ENCODE measurements at regions of chr14 and their contacts with region 1.

Region 1: DNA sequence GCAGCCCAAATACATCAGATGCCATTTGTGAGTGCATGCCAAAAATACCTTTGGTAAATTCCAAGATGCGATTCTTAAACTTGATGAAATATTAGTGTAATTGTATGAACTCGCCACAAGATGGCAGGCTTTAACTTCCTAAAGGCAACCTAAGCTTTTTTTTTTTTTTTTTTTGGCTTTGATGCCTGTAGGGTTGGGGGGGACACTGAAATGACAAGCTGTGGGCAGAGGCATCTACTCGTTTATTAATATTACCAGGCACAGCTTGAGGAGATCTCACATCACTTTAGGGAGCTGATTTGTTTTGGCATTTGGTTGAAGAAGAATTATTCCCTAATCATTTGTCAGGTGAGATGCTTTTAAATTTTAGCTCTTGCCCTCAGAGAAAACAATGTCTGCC is 126.7 kb upstream of the CCDC196 start:
- DNase-seq: peak; percentile 15
- ATAC-seq: peak; percentile 24; the same call in 2 of the 3 replicates
- H3K4me3 ChIP-seq: no peak overlapping the region
- H3K27ac ChIP-seq: no peak overlapping the region
- H3K4me1 ChIP-seq: no peaks in the 10 kb centered on the region
- H3K27me3 ChIP-seq: no peaks in the 10 kb centered on the region
- CTCF ChIP-seq: peak; percentile 21 to 66 (median 53); a peak in 5 of 6 replicates
- EP300 ChIP-seq: no peak
- POLR2A ChIP-seq: no peak
- RAD21 ChIP-seq: peak; percentile 97

Region 2: DNA sequence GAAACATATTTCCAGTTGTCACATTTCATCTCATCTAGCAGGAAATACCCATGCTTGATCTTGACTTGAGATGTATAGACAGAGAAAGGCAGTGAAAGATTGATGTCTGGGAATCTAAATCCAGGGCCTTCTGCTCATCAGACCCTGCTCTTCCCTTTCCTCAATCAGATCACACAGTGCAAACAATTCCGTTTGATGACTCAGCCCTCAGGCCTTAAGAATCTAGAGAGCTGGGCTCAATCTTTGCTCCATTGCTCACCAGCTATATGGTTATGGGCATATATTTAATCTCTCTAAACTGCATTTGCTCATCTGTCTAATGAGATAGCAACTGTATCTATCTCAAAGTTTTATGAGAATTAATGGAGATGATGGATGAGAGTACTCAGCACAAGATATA is 75.2 kb before region 1 on chr14:
- CTCF ChIA-PET with region 1: no interaction called
- POLR2A ChIA-PET with region 1: no interaction called
- RAD21 ChIA-PET with region 1: no interaction called
- SMC1A ChIA-PET with region 1: no interaction called
- in situ Hi-C with region 1: no loop called
- intact Hi-C with region 1: no loop called
- DNase-seq: no peak
- ATAC-seq: no peak
- H3K4me3 ChIP-seq: no peak overlapping the region
- H3K27ac ChIP-seq: no peak overlapping the region
- H3K4me1 ChIP-seq: no peaks in the 10 kb centered on the region
- H3K27me3 ChIP-seq: no peaks in the 10 kb centered on the region
- CTCF ChIP-seq: no peak
- EP300 ChIP-seq: no peak
- POLR2A ChIP-seq: no peak
- RAD21 ChIP-seq: no peak

Region 3: DNA sequence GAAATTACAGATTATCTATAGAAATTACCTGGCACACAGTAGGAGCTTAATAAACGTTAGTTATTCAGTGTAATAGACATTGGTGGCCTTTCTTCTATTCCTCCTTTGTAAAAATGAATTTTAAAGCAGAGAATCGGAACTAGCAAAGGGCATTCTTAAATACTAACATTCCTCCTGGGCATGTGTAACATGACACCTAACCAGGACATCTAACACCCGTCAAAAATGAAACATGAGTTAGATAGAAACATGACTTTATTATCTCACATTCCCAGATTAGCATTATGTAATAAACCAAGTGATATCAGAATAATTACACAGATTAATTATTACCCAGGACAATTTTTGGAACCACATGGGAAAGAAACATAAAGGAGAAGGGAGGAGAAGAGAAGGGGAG is 17.1 kb before region 1 on chr14:
- CTCF ChIA-PET with region 1: interaction called, 7 read pairs
- POLR2A ChIA-PET with region 1: interaction called, 4 read pairs
- RAD21 ChIA-PET with region 1: no interaction called
- SMC1A ChIA-PET with region 1: interaction called, 10 read pairs
- in situ Hi-C with region 1: no loop called
- intact Hi-C with region 1: no loop called
- DNase-seq: no peak
- ATAC-seq: no peak
- H3K4me3 ChIP-seq: no peak overlapping the region
- H3K27ac ChIP-seq: no peak overlapping the region
- H3K4me1 ChIP-seq: no peaks in the 10 kb centered on the region
- H3K27me3 ChIP-seq: no peaks in the 10 kb centered on the region
- CTCF ChIP-seq: no peak
- EP300 ChIP-seq: no peak
- POLR2A ChIP-seq: no peak
- RAD21 ChIP-seq: no peak

Region 4: DNA sequence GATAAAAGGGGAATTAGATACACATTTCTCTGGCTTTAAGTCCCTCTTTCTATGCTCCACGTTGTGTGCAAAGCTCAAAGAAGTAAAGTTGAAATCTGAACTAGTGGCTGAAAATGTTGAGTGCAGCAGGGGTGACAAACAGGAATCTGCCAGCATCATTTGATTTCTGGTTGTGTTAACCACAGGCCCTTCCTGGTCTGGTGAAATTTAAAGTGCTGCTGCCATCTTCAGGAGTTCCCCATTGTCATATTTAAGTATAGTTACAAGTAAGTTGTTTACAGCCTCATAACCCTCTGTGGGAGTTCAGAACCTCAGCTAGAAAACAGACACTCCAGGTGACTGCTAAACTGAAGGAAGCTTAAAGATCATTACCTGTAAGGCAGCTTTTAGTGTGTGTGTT is 35.8 kb after region 1 on chr14:
- CTCF ChIA-PET with region 1: interaction called, 119 read pairs
- POLR2A ChIA-PET with region 1: no interaction called
- RAD21 ChIA-PET with region 1: interaction called, 76 read pairs
- SMC1A ChIA-PET with region 1: interaction called, 55 read pairs
- in situ Hi-C with region 1: no loop called
- intact Hi-C with region 1: loop called (anchors 1 kb)
- DNase-seq: no peak
- ATAC-seq: peak; percentile 92
- H3K4me3 ChIP-seq: no peak overlapping the region
- H3K27ac ChIP-seq: no peak overlapping the region
- H3K4me1 ChIP-seq: 0 out of 2 replicates have a peak, but pooled peaks cover 5% of the 10 kb centered on the region
- H3K27me3 ChIP-seq: no peaks in the 10 kb centered on the region
- CTCF ChIP-seq: peak in 2 of 3 experiments; percentile 42 to 46; a peak in 2 of 6 replicates
- EP300 ChIP-seq: no peak
- POLR2A ChIP-seq: no peak
- RAD21 ChIP-seq: peak; percentile 63

Region 5: GRCh38 chr14:66403183-66403582 is 43.7 kb after region 1 on chr14:
- CTCF ChIA-PET with region 1: interaction called, 119 read pairs
- POLR2A ChIA-PET with region 1: no interaction called
- RAD21 ChIA-PET with region 1: interaction called, 76 read pairs
- SMC1A ChIA-PET with region 1: interaction called, 55 read pairs
- in situ Hi-C with region 1: no loop called
- intact Hi-C with region 1: loop called (anchors 1 kb)
- DNase-seq: no peak
- ATAC-seq: peak; percentile 91
- H3K4me3 ChIP-seq: no peak overlapping the region
- H3K27ac ChIP-seq: no peak overlapping the region
- H3K4me1 ChIP-seq: no peaks in the 10 kb centered on the region
- H3K27me3 ChIP-seq: no peaks in the 10 kb centered on the region
- CTCF ChIP-seq: peak; percentile 48 to 63 (median 51); a peak in 5 of 6 replicates
- EP300 ChIP-seq: no peak
- POLR2A ChIP-seq: no peak
- RAD21 ChIP-seq: peak; percentile 59

Region 6: GRCh38 chr14:67137744-67138371 is 778.4 kb after region 1 on chr14:
- CTCF ChIA-PET with region 1: interaction called, 3 read pairs
- POLR2A ChIA-PET with region 1: no interaction called
- RAD21 ChIA-PET with region 1: interaction called, 4 read pairs
- SMC1A ChIA-PET with region 1: no interaction called
- in situ Hi-C with region 1: no loop called
- intact Hi-C with region 1: loop called (anchors 5 kb)
- DNase-seq: no peak
- ATAC-seq: peak; percentile 56; the same call in 2 of the 3 replicates
- H3K4me3 ChIP-seq: no peak overlapping the region
- H3K27ac ChIP-seq: no peak overlapping the region
- H3K4me1 ChIP-seq: no peaks in the 10 kb centered on the region
- H3K27me3 ChIP-seq: no peaks in the 10 kb centered on the region
- CTCF ChIP-seq: peak; percentile 37 to 42 (median 38); a peak in 3 of 6 replicates
- EP300 ChIP-seq: no peak
- POLR2A ChIP-seq: no peak
- RAD21 ChIP-seq: peak; percentile 56